ENCODE measurements at regions of chr9 and their contacts with region 1.

Region 1: GRCh38 chr9:99690573-99690972 is 131.1 kb upstream of the NR4A3 start:
- DNase-seq: no peak
- H3K4me3 ChIP-seq: no peak overlapping the region
- H3K27ac ChIP-seq: no peak overlapping the region
- H3K4me1 ChIP-seq: no peaks in the 10 kb centered on the region
- H3K27me3 ChIP-seq: no peaks in the 10 kb centered on the region
- CTCF ChIP-seq: no peak
- POLR2A ChIP-seq: no peak

Region 2: DNA sequence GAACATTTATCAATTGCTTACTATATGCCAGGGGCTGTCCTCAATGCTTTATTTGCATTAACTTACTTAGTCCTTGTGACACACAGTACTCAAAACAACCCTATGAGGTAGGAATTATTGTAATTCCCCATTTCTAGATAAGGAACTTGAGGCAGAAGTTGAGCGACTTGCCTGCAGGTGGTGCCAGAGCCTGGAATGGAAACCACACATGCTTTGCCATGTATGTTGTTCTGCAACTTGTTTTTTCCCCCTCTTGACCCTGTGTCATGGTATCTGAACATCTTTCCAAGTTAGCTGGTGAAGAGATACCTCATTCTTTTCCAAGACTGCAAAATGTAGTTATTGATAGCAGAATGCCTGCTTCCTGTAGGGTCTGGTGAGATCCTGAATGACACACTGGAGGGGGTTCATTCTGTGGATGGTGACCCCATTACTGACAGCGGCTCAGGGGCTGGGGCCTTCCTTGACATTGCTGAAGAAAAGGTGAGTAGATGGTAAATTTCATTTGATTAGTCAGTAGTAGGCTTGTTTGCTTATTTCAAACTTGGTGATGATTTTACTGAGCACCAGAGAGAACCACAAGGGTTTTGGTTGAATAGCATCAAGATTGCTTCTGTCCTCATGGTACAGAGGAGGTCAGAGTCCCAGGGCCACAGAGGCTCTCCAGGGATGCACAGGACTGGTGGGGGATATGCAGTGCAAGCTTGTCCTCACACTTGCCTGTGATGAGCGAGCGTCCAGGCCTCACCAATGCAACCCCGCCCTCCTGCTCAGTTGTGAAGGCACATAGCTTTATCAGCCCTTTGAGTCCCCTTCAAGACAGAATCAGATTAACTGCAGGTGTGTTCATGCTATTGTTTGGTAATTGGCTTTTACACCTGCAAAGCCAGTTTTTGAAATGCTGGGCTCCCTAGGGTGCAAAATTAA is 689.8 kb before region 1 on chr9:
- intact Hi-C with region 1: no loop called
- DNase-seq: peak in 5 of 7 donors; percentile 52 to 83 (median 65)
- H3K4me3 ChIP-seq: no peak overlapping the region
- H3K27ac ChIP-seq: no peak overlapping the region
- H3K4me1 ChIP-seq: peaks cover under 1 to 26% of the 10 kb centered on the region in 2 donors
- H3K27me3 ChIP-seq: no peaks in the 10 kb centered on the region
- CTCF ChIP-seq: peak; percentile 33 to 68 (median 59)
- POLR2A ChIP-seq: no peak

Region 3: DNA sequence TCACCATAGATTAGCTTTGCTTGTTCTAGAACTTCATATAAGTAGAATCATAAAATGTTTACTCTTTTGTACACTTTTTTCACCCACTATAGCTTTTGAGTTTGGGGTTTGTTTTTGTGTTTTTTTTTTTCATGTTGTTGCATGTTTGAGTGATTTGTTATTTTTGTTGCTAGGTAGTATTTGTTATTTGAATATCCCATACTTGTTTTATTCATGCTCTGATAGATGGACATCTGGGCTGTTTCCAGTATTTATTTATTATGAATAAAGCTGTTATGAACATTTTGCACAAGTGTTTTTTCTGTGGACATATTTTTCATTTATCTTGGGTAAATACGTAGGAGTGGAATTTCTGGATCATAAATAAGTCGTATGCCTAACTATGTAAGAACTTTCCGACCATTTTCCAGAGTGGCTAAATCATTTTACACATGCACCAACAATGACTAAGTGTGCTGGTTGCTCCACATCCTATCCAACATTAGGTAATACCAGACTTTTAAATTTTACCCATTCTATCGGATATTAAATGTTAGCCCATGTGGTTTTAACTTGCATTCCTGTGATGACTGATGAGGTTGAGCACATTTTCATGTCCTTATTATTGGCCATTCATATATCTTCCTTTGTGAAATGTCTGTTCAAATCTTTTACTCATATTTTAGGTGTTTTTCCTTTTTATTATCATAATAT is 62.0 kb after region 1 on chr9:
- intact Hi-C with region 1: loop called in 1 of 2 experiments (anchors 10 kb)
- DNase-seq: no peak
- H3K4me3 ChIP-seq: no peak overlapping the region
- H3K27ac ChIP-seq: no peak overlapping the region
- H3K4me1 ChIP-seq: no peaks in the 10 kb centered on the region
- H3K27me3 ChIP-seq: no peaks in the 10 kb centered on the region
- CTCF ChIP-seq: no peak
- POLR2A ChIP-seq: no peak

Measured in adrenal gland (tissue), 19 donors.